ENCODE measurements at regions of chr3 and their contacts with region 1.

Region 1: DNA sequence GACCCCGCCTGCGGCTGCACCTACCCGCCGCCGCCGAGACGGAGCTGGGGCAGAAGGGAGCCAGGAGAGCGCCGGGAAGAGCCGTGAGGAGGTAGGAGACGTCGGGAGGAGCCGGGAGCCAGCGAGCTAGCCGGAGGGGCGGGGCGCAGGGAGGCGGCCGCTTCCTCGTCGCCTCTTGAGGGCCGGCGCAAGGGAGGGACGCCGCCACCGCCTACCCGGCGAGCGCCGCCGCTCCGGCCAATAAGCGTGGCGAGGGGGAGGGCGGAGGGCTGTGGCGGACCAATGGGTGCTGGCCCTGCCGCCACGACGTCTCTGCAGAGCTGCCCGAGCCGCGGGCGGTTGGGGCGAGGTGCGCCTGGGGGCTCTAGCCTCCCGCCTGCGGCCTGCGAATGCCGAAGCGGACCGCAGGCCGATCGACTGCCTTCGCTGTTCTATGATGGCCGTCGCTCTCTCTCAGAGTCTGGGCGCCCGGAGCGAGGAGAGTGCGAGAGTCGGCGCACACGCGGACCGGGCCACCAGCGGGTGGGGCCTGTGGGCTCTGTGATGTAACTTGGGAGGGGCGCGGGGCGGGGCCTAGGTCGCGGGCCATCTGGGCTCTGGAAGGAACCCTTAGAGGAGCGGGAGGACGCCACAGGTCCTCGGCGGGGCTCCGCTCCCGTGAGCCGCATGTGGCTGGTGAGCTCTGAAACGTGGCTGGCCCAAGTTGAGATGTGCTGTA is 72.7 kb upstream of the MAP4 start:
- DNase-seq: peak; percentile 95
- ATAC-seq: peak; percentile 92
- H3K4me3 Mint-ChIP-seq: peak overlapping the region; percentile 97
- H3K27ac Mint-ChIP-seq: peak overlapping the region; percentile 97
- H3K4me1 Mint-ChIP-seq: peaks cover 29% of the 10 kb centered on the region
- H3K27me3 Mint-ChIP-seq: no peaks in the 10 kb centered on the region
- CTCF ChIP-seq: no peak

Region 2: DNA sequence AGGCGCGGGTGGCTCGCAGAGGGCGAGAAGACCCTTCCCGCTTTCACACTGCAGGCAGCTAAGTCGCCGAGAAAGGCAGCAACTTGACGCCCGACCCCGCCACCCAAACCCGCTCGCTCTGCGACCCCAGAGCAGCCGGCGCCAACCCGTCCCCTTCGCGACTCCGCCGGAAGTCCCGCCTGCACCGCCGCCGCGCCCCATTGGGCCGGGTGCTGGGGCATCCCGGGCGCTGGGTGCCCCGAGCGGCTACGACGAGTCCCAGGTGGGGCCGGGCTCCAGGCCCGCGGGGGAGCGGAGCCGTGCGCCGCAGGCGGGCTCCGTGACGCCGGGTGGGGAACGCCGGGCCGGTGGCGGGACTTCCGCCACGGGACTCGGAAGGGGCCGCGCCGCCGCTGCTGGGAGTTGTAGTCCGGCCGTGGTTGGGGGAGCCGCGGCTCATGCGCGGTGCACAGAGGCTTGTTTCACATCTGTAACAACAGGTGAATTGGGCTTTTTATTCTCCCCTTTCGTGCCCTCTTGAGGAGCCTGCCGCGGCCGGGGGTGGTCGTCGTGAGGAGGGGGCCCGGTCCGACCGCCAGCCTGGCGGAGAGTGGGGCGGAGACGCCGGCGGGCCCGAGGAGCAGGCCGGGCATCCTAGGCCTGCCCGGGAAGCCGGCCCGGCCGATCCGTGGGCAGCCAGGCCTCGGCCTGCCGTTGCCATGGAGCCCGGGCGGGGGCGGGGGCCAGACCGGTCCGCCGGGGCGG is 286.0 kb before region 1 on chr3 and contains the start of gene DHX30:
- CTCF ChIA-PET with region 1: no interaction called
- POLR2A ChIA-PET with region 1: no interaction called
- intact Hi-C with region 1: loop called (anchors 1 kb)
- DNase-seq: peak; percentile 87
- ATAC-seq: peak; percentile 93
- H3K4me3 Mint-ChIP-seq: peak within 1 kb of the TSS; percentile 93
- H3K27ac Mint-ChIP-seq: peak within 1 kb of the TSS; percentile 92
- H3K4me1 Mint-ChIP-seq: peaks cover 20% of the 10 kb centered on the region
- H3K27me3 Mint-ChIP-seq: no peaks in the 10 kb centered on the region
- CTCF ChIP-seq: no peak
- total RNA-seq, gene DHX30: 71.3 and 77.4 TPM in 2 replicates

Region 3: GRCh38 chr3:48151058-48151806 is 62.3 kb after region 1 on chr3:
- CTCF ChIA-PET with region 1: interaction called, 3 read pairs
- POLR2A ChIA-PET with region 1: no interaction called
- intact Hi-C with region 1: loop called (anchors 1 kb)
- DNase-seq: peak; percentile 30
- ATAC-seq: peak; percentile 89
- H3K4me3 Mint-ChIP-seq: no peak overlapping the region
- H3K27ac Mint-ChIP-seq: no peak overlapping the region
- H3K4me1 Mint-ChIP-seq: no peaks in the 10 kb centered on the region
- H3K27me3 Mint-ChIP-seq: no peaks in the 10 kb centered on the region
- CTCF ChIP-seq: no peak

Region 4: GRCh38 chr3:48240711-48241491 is 152.0 kb after region 1 on chr3 and contains the start of gene ZNF589:
- CTCF ChIA-PET with region 1: interaction called, 3 read pairs
- POLR2A ChIA-PET with region 1: interaction called, 9 read pairs
- intact Hi-C with region 1: loop called (anchors 1 kb)
- DNase-seq: peak; percentile 94
- ATAC-seq: peak; percentile 96
- H3K4me3 Mint-ChIP-seq: peak within 1 kb of the TSS; percentile 92
- H3K27ac Mint-ChIP-seq: peak within 1 kb of the TSS; percentile 94
- H3K4me1 Mint-ChIP-seq: peaks cover 17% of the 10 kb centered on the region
- H3K27me3 Mint-ChIP-seq: no peaks in the 10 kb centered on the region
- CTCF ChIP-seq: no peak
- total RNA-seq, gene ZNF589: 12.4 and 19.2 TPM in 2 replicates

Region 5: DNA sequence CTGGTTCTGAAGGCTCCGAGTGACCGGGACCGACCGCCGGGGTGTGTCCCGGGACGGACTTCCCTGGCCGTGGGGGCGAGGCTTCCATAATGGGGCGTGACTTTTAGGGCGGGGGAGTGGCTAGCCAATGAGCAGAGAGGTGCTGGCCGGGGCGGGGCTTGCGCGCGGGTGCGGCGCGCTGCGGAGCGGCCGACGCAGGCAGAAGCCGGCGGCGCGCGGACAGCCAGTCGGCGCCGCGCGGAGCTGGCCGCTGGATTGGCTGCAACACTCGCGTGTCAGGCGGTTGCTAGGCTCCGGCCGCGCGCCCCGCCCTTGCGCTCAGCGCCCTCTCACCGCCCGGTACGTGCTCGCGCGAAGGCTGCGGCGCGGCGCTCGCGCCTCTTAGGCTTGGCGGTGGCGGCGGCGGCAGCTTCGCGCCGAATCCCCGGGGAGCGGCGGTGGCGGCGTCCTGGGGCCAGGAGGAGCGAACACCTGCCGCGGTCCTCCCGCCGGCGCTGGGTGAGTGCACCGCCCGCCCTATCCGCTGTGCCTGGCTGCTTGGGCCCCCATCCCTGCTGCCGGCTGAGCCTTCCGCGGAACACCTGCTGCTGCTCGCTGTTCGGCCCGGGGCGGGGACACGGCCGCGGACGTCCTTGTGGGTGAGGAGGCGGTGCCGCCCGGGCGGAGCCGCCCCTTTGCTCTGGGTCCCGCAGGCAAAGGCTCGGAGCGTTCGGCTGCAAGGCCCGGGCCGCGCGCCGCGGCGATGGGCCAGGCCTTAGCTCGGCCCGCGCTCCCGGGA is 1381.2 kb after region 1 on chr3 and contains the start of gene DAG1:
- CTCF ChIA-PET with region 1: no interaction called
- POLR2A ChIA-PET with region 1: no interaction called
- intact Hi-C with region 1: loop called (anchors 2 kb)
- DNase-seq: peak; percentile 97
- ATAC-seq: peak; percentile 87
- H3K4me3 Mint-ChIP-seq: peak within 1 kb of the TSS; percentile 91
- H3K27ac Mint-ChIP-seq: peak within 1 kb of the TSS; percentile 96
- H3K4me1 Mint-ChIP-seq: peaks cover 26% of the 10 kb centered on the region
- H3K27me3 Mint-ChIP-seq: no peaks in the 10 kb centered on the region
- CTCF ChIP-seq: no peak
- total RNA-seq, gene DAG1: 18.5 and 19.7 TPM in 2 replicates